B cell (primary cell): ENCODE measurements at regions of chr11 and their contacts with region 1.

Region 1: GRCh38 chr11:124746621-124747243 is 5.3 kb downstream of the VSIG2 start:
- DNase-seq: peak; percentile 90
- ATAC-seq: peak; percentile 90
- H3K4me3 ChIP-seq: peak overlapping the region; percentile 62 to 97 (median 83)
- H3K4me3 Mint-ChIP-seq: peak overlapping the region; percentile 99
- H3K27ac ChIP-seq: peak overlapping the region; percentile 43 to 59
- H3K27ac Mint-ChIP-seq: peak overlapping the region; percentile 97
- H3K4me1 ChIP-seq: peaks cover 24 to 42% of the 10 kb centered on the region in 2 donors
- H3K4me1 Mint-ChIP-seq: peaks cover 35% of the 10 kb centered on the region
- H3K27me3 ChIP-seq: peaks cover 0 to 3% (median 0%) of the 10 kb centered on the region in 4 experiments
- H3K27me3 Mint-ChIP-seq: no peaks in the 10 kb centered on the region
- CTCF ChIP-seq: peak; percentile 67

Region 2: DNA sequence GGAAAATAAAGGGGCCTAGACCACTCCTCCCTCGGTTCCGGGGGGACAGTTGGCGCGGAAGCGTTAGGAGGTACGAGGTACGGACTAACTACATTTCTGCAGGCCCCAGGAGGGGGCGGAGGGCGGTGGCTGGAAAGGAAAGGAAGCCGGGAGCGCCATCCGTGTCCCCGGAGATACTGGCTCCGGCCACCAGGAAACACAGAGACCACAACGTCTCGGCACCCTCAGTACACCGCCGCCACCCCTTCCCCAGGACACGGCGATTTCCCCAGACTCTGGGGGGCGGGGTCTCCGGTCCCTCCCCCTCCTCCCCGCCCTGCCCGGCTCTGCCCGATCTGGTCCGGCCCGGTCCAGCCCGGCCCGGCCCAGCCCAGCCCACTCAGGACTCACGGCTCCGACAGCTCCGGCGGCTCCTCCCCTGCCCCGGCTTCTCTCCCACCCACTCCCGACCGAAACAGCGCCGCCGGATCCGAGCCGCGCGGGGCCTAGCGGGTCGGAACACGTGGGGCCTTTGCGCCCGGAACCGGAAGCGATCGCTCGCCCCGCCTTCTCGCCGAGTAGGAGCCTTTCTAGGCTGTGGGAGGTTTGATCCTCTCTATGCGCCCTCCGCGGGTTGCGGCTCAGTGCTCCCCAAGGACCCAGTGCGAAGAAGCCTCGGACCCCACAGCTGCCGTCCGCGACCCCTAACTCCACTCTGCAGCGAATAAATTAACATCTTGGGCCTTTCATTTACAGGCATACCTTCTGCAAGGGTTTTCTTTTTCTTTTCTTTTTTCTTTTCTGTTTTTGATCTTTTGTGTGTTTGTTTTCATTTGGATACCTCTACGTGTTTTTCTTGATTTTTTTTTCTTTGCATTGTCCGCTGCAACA is 1005.3 kb before region 1 on chr11 and contains the start of gene ZNF202:
- CTCF ChIA-PET with region 1: no interaction called
- POLR2A ChIA-PET with region 1: no interaction called
- intact Hi-C with region 1: loop called (anchors 2 kb)
- DNase-seq: peak; percentile 93
- ATAC-seq: peak; percentile 90
- H3K4me3 ChIP-seq: peak within 1 kb of the TSS; percentile 73 to 96 (median 82)
- H3K4me3 Mint-ChIP-seq: peak within 1 kb of the TSS; percentile 98
- H3K27ac ChIP-seq: peak within 1 kb of the TSS; percentile 59 to 84
- H3K27ac Mint-ChIP-seq: peak within 1 kb of the TSS; percentile 96
- H3K4me1 ChIP-seq: peaks cover 20 to 21% of the 10 kb centered on the region in 2 donors
- H3K4me1 Mint-ChIP-seq: peaks cover 37% of the 10 kb centered on the region
- H3K27me3 ChIP-seq: peaks cover 0 to 7% (median 0%) of the 10 kb centered on the region in 4 experiments
- H3K27me3 Mint-ChIP-seq: peaks cover 9% of the 10 kb centered on the region
- CTCF ChIP-seq: no peak
- total RNA-seq, gene ZNF202: 25.1 and 32.3 TPM in 2 replicates

Region 3: DNA sequence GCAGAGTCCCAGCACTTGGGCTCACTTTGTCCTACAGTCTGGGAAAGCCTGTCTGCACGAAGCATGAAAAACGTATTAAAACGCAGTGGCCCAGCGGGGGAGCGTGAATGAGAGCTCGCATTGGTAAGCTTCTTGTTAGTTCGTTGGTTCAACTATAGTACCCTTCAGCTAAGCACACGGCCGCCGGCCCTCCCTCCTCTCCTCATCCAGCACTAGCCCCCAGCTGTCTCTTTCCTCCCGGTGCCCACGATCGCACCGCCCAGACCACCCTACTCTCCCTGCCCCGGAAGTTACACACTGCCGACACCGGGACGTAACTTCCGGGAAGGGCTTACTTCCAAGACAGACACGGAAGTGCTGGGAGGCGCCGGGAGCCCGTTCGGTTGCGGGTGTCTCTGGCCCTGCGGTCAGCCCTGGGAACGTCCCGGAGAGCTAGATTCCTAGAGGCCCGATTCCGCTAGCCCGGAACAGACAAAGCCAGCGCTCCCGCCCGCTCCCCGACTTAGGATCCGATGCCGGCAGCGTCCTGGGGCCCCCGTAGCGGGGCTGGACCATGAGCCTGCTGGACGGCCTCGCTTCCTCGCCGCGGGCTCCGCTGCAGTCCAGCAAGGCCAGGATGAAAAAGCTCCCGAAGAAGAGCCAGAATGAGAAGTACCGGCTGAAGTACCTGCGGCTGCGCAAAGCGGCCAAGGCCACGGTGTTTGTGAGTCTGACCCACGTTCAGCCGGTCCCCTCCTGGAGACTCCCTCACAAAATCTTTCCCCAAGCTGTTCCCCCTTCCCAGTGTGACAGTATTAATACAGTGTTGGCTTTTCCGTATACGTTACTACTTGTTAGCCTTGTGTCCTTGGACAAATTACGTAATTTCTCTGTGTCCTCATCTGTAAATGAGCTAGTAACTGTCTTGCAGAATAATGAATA is 123.9 kb before region 1 on chr11 and contains the start of gene TBRG1:
- CTCF ChIA-PET with region 1: interaction called, 3 read pairs
- POLR2A ChIA-PET with region 1: no interaction called
- intact Hi-C with region 1: loop called (anchors 5 kb)
- DNase-seq: peak; percentile 89
- ATAC-seq: peak; percentile 97
- H3K4me3 ChIP-seq: peak within 1 kb of the TSS; percentile 75 to 98 (median 91)
- H3K4me3 Mint-ChIP-seq: peak within 1 kb of the TSS; percentile 99
- H3K27ac ChIP-seq: peak within 1 kb of the TSS; percentile 71 to 95
- H3K27ac Mint-ChIP-seq: peak within 1 kb of the TSS; percentile 97
- H3K4me1 ChIP-seq: peaks cover 15 to 17% of the 10 kb centered on the region in 2 donors
- H3K4me1 Mint-ChIP-seq: peaks cover 31% of the 10 kb centered on the region
- H3K27me3 ChIP-seq: peaks cover 0 to 13% (median 3%) of the 10 kb centered on the region in 4 experiments
- H3K27me3 Mint-ChIP-seq: peaks cover 24% of the 10 kb centered on the region
- CTCF ChIP-seq: no peak
- total RNA-seq, gene TBRG1: 66.8 and 71.5 TPM in 2 replicates

Region 4: GRCh38 chr11:124727474-124727873 is 19.3 kb before region 1 on chr11:
- CTCF ChIA-PET with region 1: no interaction called
- POLR2A ChIA-PET with region 1: no interaction called
- intact Hi-C with region 1: no loop called
- DNase-seq: no peak
- ATAC-seq: no peak
- H3K4me3 ChIP-seq: no peak overlapping the region
- H3K4me3 Mint-ChIP-seq: no peak overlapping the region
- H3K27ac ChIP-seq: no peak overlapping the region
- H3K27ac Mint-ChIP-seq: no peak overlapping the region
- H3K4me1 ChIP-seq: peaks cover 28 to 30% of the 10 kb centered on the region in 2 donors
- H3K4me1 Mint-ChIP-seq: peaks cover 42% of the 10 kb centered on the region
- H3K27me3 ChIP-seq: no peaks in the 10 kb centered on the region
- H3K27me3 Mint-ChIP-seq: peaks cover 11% of the 10 kb centered on the region
- CTCF ChIP-seq: no peak

Region 5: DNA sequence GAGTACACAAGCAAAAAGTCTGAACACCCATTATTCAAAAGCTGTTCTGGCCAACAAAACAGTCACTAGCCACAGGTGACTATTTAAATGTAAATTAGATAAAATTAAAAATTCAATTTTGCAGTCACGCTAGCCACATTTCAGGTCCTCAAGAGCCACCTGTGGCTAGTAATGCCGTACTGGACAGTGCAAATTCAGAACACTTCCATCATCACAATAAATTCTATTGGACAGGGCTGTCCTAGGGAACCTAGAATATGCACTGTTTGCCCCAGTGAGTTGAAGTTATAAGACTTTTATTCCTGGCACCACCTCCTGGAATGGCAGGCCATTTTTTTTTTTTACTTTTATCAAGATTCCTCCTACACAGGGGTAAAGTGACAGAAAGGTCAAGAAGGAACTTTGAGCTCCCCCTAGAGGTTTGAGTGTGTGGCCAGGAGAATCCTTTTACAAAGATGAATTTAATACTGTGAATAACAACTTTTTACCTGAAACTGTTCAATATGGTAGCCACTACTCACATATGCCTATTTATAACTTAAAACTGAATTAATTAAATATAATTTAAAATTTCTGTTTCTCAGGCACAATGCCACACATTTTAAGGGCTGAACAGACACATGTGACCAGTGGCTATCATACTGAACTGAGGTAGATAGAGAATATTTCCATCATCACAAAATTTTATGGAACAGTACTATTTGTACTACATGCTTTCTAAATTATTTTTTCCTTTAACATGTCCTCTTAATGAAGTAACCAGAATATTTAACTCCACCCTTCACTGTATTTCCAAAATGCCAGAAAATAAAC is 46.9 kb after region 1 on chr11:
- CTCF ChIA-PET with region 1: interaction called, 12 read pairs
- POLR2A ChIA-PET with region 1: no interaction called
- intact Hi-C with region 1: no loop called
- DNase-seq: peak; percentile 67
- ATAC-seq: no peak
- H3K4me3 ChIP-seq: no peak overlapping the region
- H3K4me3 Mint-ChIP-seq: no peak overlapping the region
- H3K27ac ChIP-seq: no peak overlapping the region
- H3K27ac Mint-ChIP-seq: no peak overlapping the region
- H3K4me1 ChIP-seq: peaks cover 3 to 8% of the 10 kb centered on the region in 2 donors
- H3K4me1 Mint-ChIP-seq: peaks cover 21% of the 10 kb centered on the region
- H3K27me3 ChIP-seq: no peaks in the 10 kb centered on the region
- H3K27me3 Mint-ChIP-seq: no peaks in the 10 kb centered on the region
- CTCF ChIP-seq: peak; percentile 78

Region 6: GRCh38 chr11:124891373-124891861 is 144.7 kb after region 1 on chr11:
- CTCF ChIA-PET with region 1: no interaction called
- POLR2A ChIA-PET with region 1: no interaction called
- intact Hi-C with region 1: no loop called
- DNase-seq: no peak
- ATAC-seq: no peak
- H3K4me3 ChIP-seq: no peak overlapping the region
- H3K4me3 Mint-ChIP-seq: no peak overlapping the region
- H3K27ac ChIP-seq: no peak overlapping the region
- H3K27ac Mint-ChIP-seq: no peak overlapping the region
- H3K4me1 ChIP-seq: no peaks in the 10 kb centered on the region
- H3K4me1 Mint-ChIP-seq: no peaks in the 10 kb centered on the region
- H3K27me3 ChIP-seq: peaks cover 0 to 6% (median 2%) of the 10 kb centered on the region in 4 experiments
- H3K27me3 Mint-ChIP-seq: peaks cover 30% of the 10 kb centered on the region
- CTCF ChIP-seq: no peak

Region 7: GRCh38 chr11:124983674-124984511 is 237.2 kb after region 1 on chr11:
- CTCF ChIA-PET with region 1: no interaction called
- POLR2A ChIA-PET with region 1: no interaction called
- intact Hi-C with region 1: no loop called
- DNase-seq: no peak
- ATAC-seq: no peak
- H3K4me3 ChIP-seq: no peak overlapping the region
- H3K4me3 Mint-ChIP-seq: no peak overlapping the region
- H3K27ac ChIP-seq: no peak overlapping the region
- H3K27ac Mint-ChIP-seq: no peak overlapping the region
- H3K4me1 ChIP-seq: no peaks in the 10 kb centered on the region
- H3K4me1 Mint-ChIP-seq: no peaks in the 10 kb centered on the region
- H3K27me3 ChIP-seq: no peaks in the 10 kb centered on the region
- H3K27me3 Mint-ChIP-seq: no peaks in the 10 kb centered on the region
- CTCF ChIP-seq: no peak